ENCODE measurements at regions of chr5 and their contacts with region 1.

Region 1: GRCh38 chr5:10552183-10553143 is 11.4 kb upstream of the ANKRD33B start:
- DNase-seq: no peak

Region 2: DNA sequence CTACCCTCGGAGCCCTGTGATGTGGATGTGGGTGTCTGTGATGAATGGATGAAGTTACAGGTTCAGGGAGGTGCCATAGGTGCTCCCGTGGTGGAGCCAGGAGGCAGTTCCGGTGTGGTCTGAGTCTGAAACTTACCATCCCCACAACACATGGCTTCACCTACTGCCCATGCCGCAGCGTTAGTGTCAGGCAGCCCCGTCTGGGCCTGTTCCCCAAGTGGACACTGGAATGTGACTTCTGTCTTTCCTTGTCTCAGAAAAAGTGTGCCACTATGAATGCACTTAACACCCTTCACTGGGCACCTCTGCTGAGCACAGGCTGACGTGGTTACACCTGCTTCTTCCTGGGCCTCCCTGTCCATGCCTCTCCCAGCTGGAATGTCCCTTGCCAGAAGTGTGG is 20.0 kb after region 1 on chr5:
- intact Hi-C with region 1: loop called in 1 of 2 experiments (anchors 1 kb)
- DNase-seq: no peak

Region 3: GRCh38 chr5:10635867-10636350 is 83.4 kb after region 1 on chr5:
- intact Hi-C with region 1: no loop called
- DNase-seq: peak; percentile 63

Measured in posterior vena cava (tissue), 2 donors.